ENCODE measurements at regions of chr1 and their contacts with region 1.

Region 1: DNA sequence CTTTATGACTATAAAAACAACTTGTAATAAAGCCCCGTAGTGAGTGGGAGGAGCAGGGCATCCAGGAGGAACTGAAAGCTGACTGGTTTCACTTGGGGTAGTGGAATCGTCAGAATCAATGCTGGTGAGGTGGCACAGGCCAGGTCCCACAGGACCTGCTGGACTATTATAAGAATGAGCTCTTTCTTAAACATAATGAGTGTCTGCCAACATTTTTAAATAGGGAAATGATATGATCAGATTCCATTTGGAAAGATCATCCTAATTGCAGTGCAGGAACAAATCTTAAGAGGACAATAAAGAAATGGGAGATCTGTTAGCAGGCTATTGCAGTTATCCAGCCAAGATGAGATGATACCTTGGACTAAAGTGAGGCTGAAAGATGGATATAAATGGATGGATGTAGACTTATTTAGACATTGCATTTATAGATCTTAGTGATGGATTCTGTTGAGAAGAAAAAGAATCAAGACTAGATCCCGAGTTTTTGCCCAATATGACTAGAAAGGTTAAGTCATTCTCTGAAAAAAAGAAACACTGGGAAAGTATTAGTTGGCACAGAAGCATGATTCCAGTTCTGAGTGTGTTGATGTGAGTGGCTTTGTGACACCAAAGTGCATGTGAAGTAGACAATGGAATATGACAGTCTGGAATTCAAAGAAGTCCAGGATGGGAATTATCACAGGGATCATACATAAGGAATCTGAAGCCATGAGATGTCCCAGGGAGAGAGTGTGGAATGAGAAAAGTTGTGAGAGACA is 153.3 kb upstream of the SGIP1 start:
- DNase-seq: peak; percentile 59
- ATAC-seq: peak; percentile 98
- H3K4me3 Mint-ChIP-seq: peak overlapping the region; percentile 72
- H3K27ac Mint-ChIP-seq: peak overlapping the region; percentile 92
- H3K4me1 Mint-ChIP-seq: peaks cover 87% of the 10 kb centered on the region
- H3K27me3 Mint-ChIP-seq: no peaks in the 10 kb centered on the region
- CTCF ChIP-seq: no peak

Region 2: DNA sequence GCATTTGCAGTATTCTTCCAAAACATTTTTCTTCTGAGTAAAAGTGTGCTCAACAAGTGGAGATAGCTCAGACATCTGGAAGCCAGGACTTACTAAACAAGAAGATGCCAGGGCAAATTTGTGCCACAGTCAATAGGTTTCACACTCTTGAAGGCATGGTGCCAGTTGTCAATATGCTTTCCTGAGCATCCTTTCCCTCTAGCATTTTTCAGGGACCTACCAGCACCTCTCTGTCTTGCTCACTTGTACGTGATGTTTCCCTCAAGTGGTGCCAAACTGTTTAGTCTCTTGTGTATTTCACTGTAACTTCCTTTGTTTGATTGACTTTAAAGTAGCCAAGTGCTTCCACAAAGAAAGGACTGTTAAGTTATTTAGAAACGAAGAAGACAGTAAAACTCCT is 40.7 kb before region 1 on chr1:
- CTCF ChIA-PET with region 1: interaction called, 10 read pairs
- POLR2A ChIA-PET with region 1: interaction called, 279 read pairs
- intact Hi-C with region 1: loop called (anchors 1 kb)
- DNase-seq: no peak
- ATAC-seq: no peak
- H3K4me3 Mint-ChIP-seq: peak overlapping the region; percentile 64
- H3K27ac Mint-ChIP-seq: peak overlapping the region; percentile 83
- H3K4me1 Mint-ChIP-seq: peaks cover 86% of the 10 kb centered on the region
- H3K27me3 Mint-ChIP-seq: no peaks in the 10 kb centered on the region
- CTCF ChIP-seq: no peak

Region 3: GRCh38 chr1:66360285-66360724 is 20.3 kb before region 1 on chr1:
- CTCF ChIA-PET with region 1: interaction called, 3 read pairs
- POLR2A ChIA-PET with region 1: interaction called, 15 read pairs
- intact Hi-C with region 1: loop called (anchors 2 kb)
- DNase-seq: no peak
- ATAC-seq: peak; percentile 64
- H3K4me3 Mint-ChIP-seq: no peak overlapping the region
- H3K27ac Mint-ChIP-seq: peak overlapping the region; percentile 77
- H3K4me1 Mint-ChIP-seq: peaks cover 84% of the 10 kb centered on the region
- H3K27me3 Mint-ChIP-seq: no peaks in the 10 kb centered on the region
- CTCF ChIP-seq: no peak

Region 4: DNA sequence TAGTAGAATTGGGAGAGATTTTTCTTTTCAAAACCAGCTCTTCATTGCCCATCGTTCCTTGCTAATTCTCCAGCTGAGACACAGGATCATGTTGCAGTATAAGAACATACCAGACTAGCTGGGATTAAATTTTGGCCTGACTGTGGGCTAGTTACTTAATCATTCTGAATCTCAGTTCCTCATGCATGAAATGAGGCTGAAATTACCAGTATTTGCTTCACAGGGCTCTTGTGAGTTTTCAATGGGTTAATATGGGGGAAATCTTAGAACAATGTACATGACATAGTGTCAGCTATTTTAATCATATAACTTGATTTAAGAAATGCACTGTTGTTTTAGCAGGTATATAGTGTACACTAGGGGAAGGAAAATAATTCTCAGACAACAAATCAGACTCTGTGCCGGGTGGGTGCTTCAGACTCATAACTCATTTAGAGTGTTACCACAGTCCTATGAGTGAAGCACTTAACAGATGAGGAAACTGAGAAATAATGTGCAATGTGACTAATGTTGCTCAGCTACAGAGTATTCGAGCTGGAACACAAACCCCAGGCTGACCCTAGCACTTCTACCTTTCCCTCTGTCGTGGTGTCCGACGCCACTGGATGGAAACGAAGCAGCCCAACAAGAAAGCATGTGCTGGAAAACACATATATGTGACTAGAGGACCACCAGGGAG is 15.7 kb after region 1 on chr1:
- CTCF ChIA-PET with region 1: interaction called, 34 read pairs
- POLR2A ChIA-PET with region 1: interaction called, 156 read pairs
- intact Hi-C with region 1: loop called (anchors 1 kb)
- DNase-seq: no peak
- ATAC-seq: peak; percentile 71
- H3K4me3 Mint-ChIP-seq: peak overlapping the region; percentile 48
- H3K27ac Mint-ChIP-seq: peak overlapping the region; percentile 74
- H3K4me1 Mint-ChIP-seq: peaks cover 81% of the 10 kb centered on the region
- H3K27me3 Mint-ChIP-seq: no peaks in the 10 kb centered on the region
- CTCF ChIP-seq: no peak

Region 5: GRCh38 chr1:66436378-66437145 is 55.9 kb after region 1 on chr1:
- CTCF ChIA-PET with region 1: interaction called, 182 read pairs
- POLR2A ChIA-PET with region 1: interaction called, 19 read pairs
- intact Hi-C with region 1: loop called (anchors 1 kb)
- DNase-seq: no peak
- ATAC-seq: peak; percentile 65
- H3K4me3 Mint-ChIP-seq: no peak overlapping the region
- H3K27ac Mint-ChIP-seq: peak overlapping the region; percentile 63
- H3K4me1 Mint-ChIP-seq: peaks cover 38% of the 10 kb centered on the region
- H3K27me3 Mint-ChIP-seq: no peaks in the 10 kb centered on the region
- CTCF ChIP-seq: no peak

Measured in activated B cell treated with CpG ODN at 0.5 μM for 24 hours (primary cell).